ENCODE measurements at regions of chr21 and their contacts with region 1.

Region 1: DNA sequence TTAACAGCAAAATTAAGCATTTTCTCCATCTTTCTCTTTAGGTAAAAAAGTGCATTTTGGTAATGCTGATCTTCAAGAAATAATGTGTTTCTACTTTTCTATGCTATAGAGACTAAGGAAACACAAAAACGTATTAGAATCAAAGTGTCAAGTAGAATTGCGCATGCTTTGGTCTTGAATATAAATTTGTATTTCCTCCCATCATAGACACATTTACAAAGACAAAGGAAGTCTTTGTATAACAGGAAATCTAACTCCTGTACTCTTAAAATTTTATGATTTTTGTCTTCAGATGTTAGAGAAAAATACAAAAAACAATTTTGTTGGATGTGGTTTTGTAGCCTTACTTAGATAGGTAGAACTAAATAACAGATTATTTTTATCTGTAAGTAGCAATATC is 1299.4 kb downstream of the NCAM2 start:
- DNase-seq: no peak
- ATAC-seq: no peak
- H3K4me3 ChIP-seq: no peak overlapping the region
- H3K27ac ChIP-seq: no peak overlapping the region
- H3K4me1 ChIP-seq: no peaks in the 10 kb centered on the region
- H3K27me3 ChIP-seq: no peaks in the 10 kb centered on the region
- CTCF ChIP-seq: no peak

Region 2: DNA sequence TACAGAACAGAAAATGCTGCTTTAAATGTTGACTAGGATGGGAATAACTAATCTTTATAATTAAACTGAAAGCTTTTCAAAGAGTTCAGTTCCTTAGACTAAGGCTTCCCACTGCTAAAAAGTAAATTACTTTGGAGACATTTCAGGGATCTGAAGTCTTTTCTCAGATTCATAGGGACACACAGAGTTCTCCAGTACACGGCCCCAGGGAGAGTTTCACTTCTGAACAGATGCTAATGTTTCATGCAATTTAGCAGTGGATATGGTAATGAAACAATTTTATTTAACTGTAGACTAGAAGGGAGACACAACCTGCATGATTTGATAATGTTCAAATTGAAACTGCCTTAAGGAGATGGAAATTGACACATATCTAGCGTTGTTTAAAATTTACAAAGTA is 16.7 kb before region 1 on chr21:
- intact Hi-C with region 1: loop called in 1 of 10 experiments (anchors 2 kb)
- DNase-seq: no peak
- ATAC-seq: no peak
- H3K4me3 ChIP-seq: no peak overlapping the region
- H3K27ac ChIP-seq: no peak overlapping the region
- H3K4me1 ChIP-seq: no peaks in the 10 kb centered on the region
- H3K27me3 ChIP-seq: no peaks in the 10 kb centered on the region
- CTCF ChIP-seq: no peak